ENCODE measurements at regions of chr10 and their contacts with region 1.

Region 1: GRCh38 chr10:6667679-6668270 is 87.7 kb upstream of the PRKCQ start:
- DNase-seq: peak; percentile 41
- ATAC-seq: peak; percentile 74
- H3K4me3 Mint-ChIP-seq: no peak overlapping the region
- H3K27ac Mint-ChIP-seq: no peak overlapping the region
- H3K4me1 Mint-ChIP-seq: peaks cover 4% of the 10 kb centered on the region
- H3K27me3 Mint-ChIP-seq: no peaks in the 10 kb centered on the region
- CTCF ChIP-seq: 0 out of 2 replicates have a peak, but pooled peaks have one; percentile 23

Region 2: GRCh38 chr10:6416892-6417512 is 250.8 kb before region 1 on chr10:
- CTCF ChIA-PET with region 1: interaction called, 14 read pairs
- POLR2A ChIA-PET with region 1: no interaction called
- DNase-seq: no peak
- ATAC-seq: peak; percentile 81
- H3K4me3 Mint-ChIP-seq: no peak overlapping the region
- H3K27ac Mint-ChIP-seq: no peak overlapping the region
- H3K4me1 Mint-ChIP-seq: peaks cover 4% of the 10 kb centered on the region
- H3K27me3 Mint-ChIP-seq: no peaks in the 10 kb centered on the region
- CTCF ChIP-seq: peak; percentile 78

Region 3: DNA sequence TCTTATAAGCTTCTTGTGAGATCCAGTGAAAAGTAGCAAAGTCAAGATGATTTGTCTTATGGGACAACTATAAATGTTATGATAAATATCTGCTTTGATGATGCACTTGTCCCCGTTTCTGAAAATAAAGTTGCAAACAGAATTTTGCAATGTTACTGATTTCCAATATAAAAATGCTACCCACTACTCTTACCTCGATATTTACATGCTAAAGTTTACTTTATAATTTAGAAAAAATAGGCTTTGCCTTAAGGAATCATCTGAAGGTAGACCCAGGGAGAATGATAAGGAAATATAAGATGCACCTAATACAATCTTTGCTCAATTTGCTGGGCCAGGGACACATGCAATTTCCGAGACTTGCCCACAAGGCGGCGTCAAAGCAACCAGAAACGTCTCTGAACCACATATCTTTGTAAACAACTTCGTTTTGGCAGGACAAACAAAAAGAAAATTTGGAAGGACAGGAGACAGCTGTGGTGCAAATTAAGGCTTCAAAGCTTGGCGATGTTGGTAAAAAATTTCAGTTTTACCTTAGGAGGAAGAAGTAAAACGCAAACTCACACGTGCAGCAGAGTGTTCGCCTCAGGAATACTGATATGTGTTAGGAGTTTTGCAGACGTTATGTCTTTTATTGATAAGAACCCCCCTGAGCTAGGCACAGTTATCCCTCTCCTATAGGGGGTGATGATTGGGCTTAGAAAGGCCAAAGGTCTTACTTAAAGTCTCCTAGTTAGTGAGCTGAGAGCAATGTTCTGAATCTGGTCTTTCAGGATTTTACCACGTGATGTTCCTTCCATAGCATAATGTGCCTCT is 222.1 kb before region 1 on chr10:
- CTCF ChIA-PET with region 1: interaction called, 14 read pairs
- POLR2A ChIA-PET with region 1: no interaction called
- DNase-seq: peak; percentile 51
- ATAC-seq: peak; percentile 48; the same call in 1 of the 2 replicates
- H3K4me3 Mint-ChIP-seq: no peak overlapping the region
- H3K27ac Mint-ChIP-seq: 0 out of 2 replicates have a peak overlapping the region, but pooled peaks have one; percentile 49
- H3K4me1 Mint-ChIP-seq: peaks cover 5% of the 10 kb centered on the region; the same call in 1 of the 2 replicates
- H3K27me3 Mint-ChIP-seq: no peaks in the 10 kb centered on the region
- CTCF ChIP-seq: no peak

Region 4: GRCh38 chr10:6514844-6515780 is 152.7 kb before region 1 on chr10:
- CTCF ChIA-PET with region 1: interaction called, 17 read pairs
- POLR2A ChIA-PET with region 1: no interaction called
- DNase-seq: no peak
- ATAC-seq: no peak
- H3K4me3 Mint-ChIP-seq: no peak overlapping the region
- H3K27ac Mint-ChIP-seq: no peak overlapping the region
- H3K4me1 Mint-ChIP-seq: peaks cover 15% of the 10 kb centered on the region
- H3K27me3 Mint-ChIP-seq: no peaks in the 10 kb centered on the region
- CTCF ChIP-seq: no peak

Region 5: GRCh38 chr10:6580279-6581029 is 87.3 kb before region 1 on chr10:
- CTCF ChIA-PET with region 1: interaction called, 11 read pairs
- POLR2A ChIA-PET with region 1: no interaction called
- DNase-seq: peak; percentile 81
- ATAC-seq: peak; percentile 74
- H3K4me3 Mint-ChIP-seq: peak overlapping the region; percentile 85
- H3K27ac Mint-ChIP-seq: peak overlapping the region; percentile 58
- H3K4me1 Mint-ChIP-seq: peaks cover 35% of the 10 kb centered on the region
- H3K27me3 Mint-ChIP-seq: peaks cover 5% of the 10 kb centered on the region
- CTCF ChIP-seq: peak; percentile 76